Natural killer cell (primary cell): ENCODE measurements at regions of chr17 and their contacts with region 1.

Region 1: DNA sequence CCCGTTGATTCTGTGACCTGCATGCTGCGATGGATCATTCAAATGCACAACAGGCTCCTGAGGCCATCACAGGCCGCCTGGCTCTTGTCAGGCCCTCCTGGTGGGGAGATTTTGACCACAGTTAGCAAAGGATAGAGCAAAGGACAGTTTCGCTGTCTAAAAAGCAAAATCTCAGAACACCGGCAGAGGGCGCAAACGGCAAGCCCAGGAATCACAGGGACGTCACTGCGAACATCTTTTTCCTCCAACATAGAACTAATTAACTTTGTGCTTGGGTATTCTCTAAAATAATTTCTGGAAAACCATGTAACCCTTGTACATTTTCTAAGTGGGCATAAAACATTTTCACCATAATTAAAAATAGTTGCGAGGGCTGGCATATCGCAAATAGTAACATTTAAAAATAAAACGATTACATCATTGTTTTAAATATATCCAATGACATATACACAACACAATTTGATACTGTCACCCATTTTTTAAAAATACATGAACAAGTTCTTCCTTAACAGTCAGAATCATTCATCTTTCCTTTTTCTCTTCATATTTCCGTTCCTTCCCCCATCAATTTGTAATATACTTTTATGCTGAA is 19.7 kb upstream of the SLC47A1 start:
- DNase-seq: peak; percentile 58 to 84
- ATAC-seq: peak; percentile 50 to 89 (median 66)
- H3K4me3 ChIP-seq: no peak overlapping the region
- H3K4me3 Mint-ChIP-seq: peak overlapping the region; percentile 22
- H3K27ac ChIP-seq: no peak overlapping the region
- H3K27ac Mint-ChIP-seq: peak overlapping the region in 1 of 2 donors; percentile 45
- H3K4me1 ChIP-seq: no peaks in the 10 kb centered on the region
- H3K4me1 Mint-ChIP-seq: peaks cover 5 to 7% of the 10 kb centered on the region in 2 donors
- H3K27me3 ChIP-seq: no peaks in the 10 kb centered on the region
- H3K27me3 Mint-ChIP-seq: peaks cover 0 to 7% of the 10 kb centered on the region in 2 donors
- CTCF ChIP-seq: peak; percentile 87

Region 2: GRCh38 chr17:19502517-19502916 is 11.5 kb before region 1 on chr17:
- intact Hi-C with region 1: no loop called
- DNase-seq: peak in 1 of 2 donors; percentile 70
- ATAC-seq: peak; percentile 56 to 79 (median 59)
- H3K4me3 ChIP-seq: no peak overlapping the region
- H3K4me3 Mint-ChIP-seq: no peak overlapping the region
- H3K27ac ChIP-seq: peak overlapping the region; percentile 31
- H3K27ac Mint-ChIP-seq: no peak overlapping the region
- H3K4me1 ChIP-seq: peaks cover 17% of the 10 kb centered on the region
- H3K4me1 Mint-ChIP-seq: no peaks in the 10 kb centered on the region
- H3K27me3 ChIP-seq: no peaks in the 10 kb centered on the region
- H3K27me3 Mint-ChIP-seq: peaks cover 4 to 5% of the 10 kb centered on the region in 2 donors
- CTCF ChIP-seq: no peak

Region 3: GRCh38 chr17:19648475-19649406 is 134.7 kb after region 1 on chr17 and contains the start of gene ALDH3A2:
- intact Hi-C with region 1: loop called (anchors 5 kb)
- DNase-seq: peak; percentile 90 to 94
- ATAC-seq: peak; percentile 92 to 98 (median 95)
- H3K4me3 ChIP-seq: peak within 1 kb of the TSS; percentile 82
- H3K4me3 Mint-ChIP-seq: peak within 1 kb of the TSS; percentile 98
- H3K27ac ChIP-seq: peak within 1 kb of the TSS; percentile 76
- H3K27ac Mint-ChIP-seq: peak within 1 kb of the TSS; percentile 80 to 89
- H3K4me1 ChIP-seq: peaks cover 22% of the 10 kb centered on the region
- H3K4me1 Mint-ChIP-seq: peaks cover 36 to 55% of the 10 kb centered on the region in 2 donors
- H3K27me3 ChIP-seq: no peaks in the 10 kb centered on the region
- H3K27me3 Mint-ChIP-seq: no peaks in the 10 kb centered on the region
- CTCF ChIP-seq: no peak
- total RNA-seq, gene ALDH3A2: 25.3 to 33.7 (median 31.4) TPM

Region 4: GRCh38 chr17:19766422-19767270 is 252.7 kb after region 1 on chr17:
- intact Hi-C with region 1: loop called (anchors 1 kb)
- DNase-seq: peak; percentile 75 to 86
- ATAC-seq: peak; percentile 74 to 93 (median 92)
- H3K4me3 ChIP-seq: no peak overlapping the region
- H3K4me3 Mint-ChIP-seq: no peak overlapping the region
- H3K27ac ChIP-seq: no peak overlapping the region
- H3K27ac Mint-ChIP-seq: no peak overlapping the region
- H3K4me1 ChIP-seq: peaks cover 14% of the 10 kb centered on the region
- H3K4me1 Mint-ChIP-seq: no peaks in the 10 kb centered on the region
- H3K27me3 ChIP-seq: no peaks in the 10 kb centered on the region
- H3K27me3 Mint-ChIP-seq: peaks cover 0 to 2% of the 10 kb centered on the region in 2 donors
- CTCF ChIP-seq: peak; percentile 90